ENCODE measurements at regions of chr5 and their contacts with region 1.

Region 1: GRCh38 chr5:137822158-137822764 is 45.4 kb upstream of the MYOT start:
- DNase-seq: peak; percentile 15
- ATAC-seq: no peak
- H3K4me3 Mint-ChIP-seq: no peak overlapping the region
- H3K27ac Mint-ChIP-seq: no peak overlapping the region
- H3K4me1 Mint-ChIP-seq: no peaks in the 10 kb centered on the region
- H3K27me3 Mint-ChIP-seq: no peaks in the 10 kb centered on the region

Region 2: DNA sequence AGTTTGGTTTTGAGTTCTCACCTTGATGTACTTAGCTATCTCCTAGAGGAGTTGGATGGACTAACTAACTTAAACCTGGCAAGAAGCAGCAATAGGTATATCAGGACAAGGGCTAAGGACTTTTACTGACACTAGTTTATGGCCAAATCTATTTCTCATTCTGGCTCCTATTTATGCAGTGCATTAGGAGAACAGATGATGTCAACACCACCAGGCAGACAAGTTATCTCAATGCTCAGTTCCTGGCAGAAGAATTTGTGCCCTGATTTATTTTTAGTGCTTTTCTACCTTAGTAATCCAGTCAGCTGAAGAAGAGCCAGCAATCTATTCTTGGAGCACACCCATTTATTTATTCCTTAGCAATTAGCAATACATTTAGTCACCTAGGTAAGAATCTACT is 14.7 kb after region 1 on chr5:
- CTCF ChIA-PET with region 1: interaction called, 3 read pairs
- POLR2A ChIA-PET with region 1: interaction called, 12 read pairs
- intact Hi-C with region 1: no loop called
- DNase-seq: no peak
- ATAC-seq: no peak
- H3K4me3 Mint-ChIP-seq: no peak overlapping the region
- H3K27ac Mint-ChIP-seq: no peak overlapping the region
- H3K4me1 Mint-ChIP-seq: no peaks in the 10 kb centered on the region
- H3K27me3 Mint-ChIP-seq: no peaks in the 10 kb centered on the region

Region 3: DNA sequence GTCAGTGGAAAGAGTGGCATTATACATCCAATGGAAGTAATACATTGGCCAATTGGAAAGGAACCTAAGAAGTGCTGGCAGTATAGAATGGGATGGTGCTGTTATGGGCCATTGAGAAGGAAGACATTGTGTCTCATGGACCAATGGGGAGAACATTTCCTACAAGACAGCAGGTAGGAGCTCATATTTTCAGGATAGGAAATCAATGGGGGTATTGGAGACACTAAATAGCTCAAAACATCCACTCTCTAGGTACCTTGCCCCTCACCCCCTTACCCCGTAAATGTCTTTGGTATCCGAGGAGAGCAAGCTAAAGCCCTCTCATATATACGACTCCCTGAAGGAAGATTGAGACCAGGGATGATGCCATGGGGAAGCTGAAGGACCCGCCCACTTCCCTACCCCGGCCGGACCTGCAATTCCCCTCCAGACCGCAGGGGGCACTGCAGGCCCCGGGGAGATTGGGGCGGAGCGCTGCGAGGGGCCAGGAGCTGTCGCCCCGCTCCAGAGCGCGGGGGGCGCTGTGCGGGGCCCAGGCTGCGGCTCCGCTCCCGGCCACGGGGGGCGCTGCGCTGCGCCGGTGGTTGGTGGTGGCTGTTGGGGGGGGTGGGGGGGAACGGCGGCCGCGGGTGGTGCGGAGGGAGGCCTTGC is 529.9 kb after region 1 on chr5 and contains the start of gene KDM3B:
- CTCF ChIA-PET with region 1: no interaction called
- POLR2A ChIA-PET with region 1: no interaction called
- intact Hi-C with region 1: no loop called
- DNase-seq: peak; percentile 94
- ATAC-seq: peak; percentile 76
- H3K4me3 Mint-ChIP-seq: peak within 1 kb of the TSS; percentile 99
- H3K27ac Mint-ChIP-seq: peak within 1 kb of the TSS; percentile 96
- H3K4me1 Mint-ChIP-seq: peaks cover 44% of the 10 kb centered on the region
- H3K27me3 Mint-ChIP-seq: no peaks in the 10 kb centered on the region
- total RNA-seq, gene KDM3B: 39.0 to 40.9 TPM

Measured in activated CD4-positive, alpha-beta T cell treated with anti-CD3 and anti-CD28 coated beads for 36 hours (primary cell).